Mammary epithelial cell (primary cell): ENCODE measurements at regions of chr1 and their contacts with region 1.

Region 1: GRCh38 chr1:9700340-9700739 is 48.8 kb downstream of the PIK3CD start:
- DNase-seq: peak; percentile 91
- H3K4me3 ChIP-seq: no peak overlapping the region
- H3K27ac ChIP-seq: peak overlapping the region; percentile 82
- H3K4me1 ChIP-seq: peaks cover 32% of the 10 kb centered on the region
- H3K27me3 ChIP-seq: no peaks in the 10 kb centered on the region
- CTCF ChIP-seq: no peak

Region 2: GRCh38 chr1:9615316-9616063 is 84.8 kb before region 1 on chr1:
- CTCF ChIA-PET with region 1: no interaction called
- dilution Hi-C with region 1: no loop called
- in situ Hi-C with region 1: no loop called
- intact Hi-C with region 1: no loop called
- DNase-seq: peak; percentile 32
- H3K4me3 ChIP-seq: no peak overlapping the region
- H3K27ac ChIP-seq: no peak overlapping the region
- H3K4me1 ChIP-seq: no peaks in the 10 kb centered on the region
- H3K27me3 ChIP-seq: no peaks in the 10 kb centered on the region
- CTCF ChIP-seq: peak; percentile 64 to 81

Region 3: DNA sequence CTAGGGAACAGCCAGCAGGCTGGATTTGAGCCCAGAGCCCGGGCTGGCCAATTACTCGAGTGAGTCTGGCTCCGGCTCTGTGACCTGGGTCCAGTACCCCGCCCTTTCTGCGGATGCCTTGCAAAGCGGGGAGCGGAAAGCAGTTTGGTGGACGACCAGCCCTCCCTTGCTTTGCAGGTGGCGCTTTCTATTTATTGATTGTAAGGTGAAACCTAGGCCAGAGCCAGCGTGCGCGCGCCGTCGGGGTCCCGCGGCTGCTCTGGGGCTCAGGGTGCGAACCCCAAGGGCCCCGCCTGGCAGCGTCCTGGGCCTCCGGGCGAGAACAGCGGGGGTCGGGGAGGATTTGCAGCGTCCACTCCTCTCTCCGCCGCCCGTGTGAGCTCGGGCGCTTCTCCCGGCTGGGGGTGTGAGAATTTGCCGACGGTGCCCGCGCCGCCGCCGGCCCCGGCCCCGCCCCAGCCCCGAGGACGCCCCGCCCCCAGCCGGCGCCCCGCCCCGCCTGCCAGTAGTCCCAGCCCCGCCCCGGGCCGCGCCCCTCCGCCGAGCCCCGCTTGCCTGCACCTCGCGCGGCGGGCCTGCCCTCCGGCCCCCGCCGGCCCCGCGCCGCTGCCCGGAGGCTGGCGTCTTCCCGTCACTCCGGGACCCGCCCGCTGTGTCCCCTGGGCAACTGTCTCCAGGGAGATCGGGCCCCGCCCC is 11.2 kb before region 1 on chr1:
- CTCF ChIA-PET with region 1: no interaction called
- dilution Hi-C with region 1: no loop called
- in situ Hi-C with region 1: no loop called
- intact Hi-C with region 1: loop called (anchors 1 kb)
- DNase-seq: peak; percentile 66
- H3K4me3 ChIP-seq: peak overlapping the region; percentile 48 to 62 (median 53)
- H3K27ac ChIP-seq: peak overlapping the region; percentile 18
- H3K4me1 ChIP-seq: peaks cover 39% of the 10 kb centered on the region
- H3K27me3 ChIP-seq: no peaks in the 10 kb centered on the region
- CTCF ChIP-seq: no peak

Region 4: GRCh38 chr1:9717193-9718005 is 17.1 kb after region 1 on chr1:
- CTCF ChIA-PET with region 1: no interaction called
- dilution Hi-C with region 1: no loop called
- in situ Hi-C with region 1: no loop called
- intact Hi-C with region 1: loop called (anchors 2 kb)
- DNase-seq: no peak
- H3K4me3 ChIP-seq: no peak overlapping the region
- H3K27ac ChIP-seq: no peak overlapping the region
- H3K4me1 ChIP-seq: peaks cover 53% of the 10 kb centered on the region
- H3K27me3 ChIP-seq: no peaks in the 10 kb centered on the region
- CTCF ChIP-seq: no peak

Region 5: DNA sequence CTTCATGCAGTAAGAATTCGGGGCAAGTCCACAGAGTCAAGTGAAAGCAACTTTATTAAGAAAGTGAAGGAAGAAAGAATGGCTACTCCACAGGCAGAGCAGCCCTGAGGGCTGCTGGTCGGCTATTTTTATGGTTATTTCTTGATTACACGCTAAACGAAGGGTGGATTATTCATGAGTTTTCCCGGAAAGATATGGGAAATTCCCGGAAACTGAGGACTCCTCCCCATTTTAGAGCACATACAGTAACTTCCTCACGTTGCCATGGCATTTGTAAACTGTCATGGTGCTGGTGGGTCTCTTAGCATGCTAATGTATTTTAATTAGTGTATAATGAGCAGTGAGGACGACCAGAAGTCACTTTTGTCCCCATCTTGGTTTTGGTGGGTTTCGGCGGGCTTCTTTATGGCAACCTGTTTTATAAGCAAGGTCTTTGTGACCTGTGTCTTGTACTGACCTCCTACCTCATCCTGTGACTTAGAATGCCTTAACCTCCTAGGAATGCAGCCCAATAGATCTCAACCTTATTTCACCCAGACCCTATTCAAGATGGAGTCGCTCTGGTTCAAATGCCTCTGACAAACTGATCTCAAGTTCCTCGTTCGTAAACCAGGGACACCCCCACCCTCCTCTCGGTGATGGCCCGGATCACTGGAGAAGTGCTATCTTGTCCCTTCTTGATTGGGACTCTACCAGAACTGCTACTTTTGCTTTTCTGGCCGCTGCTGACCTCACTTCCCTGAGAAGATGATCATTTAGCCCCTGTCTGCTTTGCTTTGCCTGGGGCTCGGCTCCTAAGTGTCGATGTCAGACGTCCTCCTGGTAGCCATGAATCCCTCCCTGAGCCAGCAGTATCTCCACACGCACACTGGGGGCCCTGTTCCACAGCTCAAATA is 74.6 kb after region 1 on chr1:
- CTCF ChIA-PET with region 1: no interaction called
- dilution Hi-C with region 1: loop called (anchors 5 kb)
- in situ Hi-C with region 1: no loop called
- intact Hi-C with region 1: no loop called
- DNase-seq: no peak
- H3K4me3 ChIP-seq: no peak overlapping the region
- H3K27ac ChIP-seq: no peak overlapping the region
- H3K4me1 ChIP-seq: peaks cover 5% of the 10 kb centered on the region
- H3K27me3 ChIP-seq: no peaks in the 10 kb centered on the region
- CTCF ChIP-seq: no peak